ENCODE measurements at regions of chr13 and their contacts with region 1.

Region 1: DNA sequence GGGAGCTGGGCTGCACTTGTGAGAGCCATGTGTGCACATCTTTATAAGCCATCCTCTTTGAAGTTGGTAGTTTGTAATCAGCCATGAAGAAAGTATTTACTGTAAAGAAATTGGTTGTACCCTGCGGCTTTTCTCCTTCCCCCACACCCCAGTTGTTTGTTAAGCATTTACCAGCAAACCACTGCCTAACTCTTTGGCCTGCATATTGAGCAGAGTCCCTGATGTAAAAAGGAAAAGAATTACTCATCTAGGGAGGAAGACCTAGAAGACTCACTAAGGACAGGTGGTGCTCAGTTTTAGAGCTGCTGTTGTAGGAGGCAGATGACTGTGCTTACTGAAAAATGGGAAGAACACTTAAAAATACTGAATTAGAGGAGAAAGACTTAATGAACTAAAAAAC is 245.3 kb downstream of the PCCA start:
- DNase-seq: no peak
- H3K4me3 ChIP-seq: no peak overlapping the region
- CTCF ChIP-seq: no peak

Region 2: GRCh38 chr13:99322297-99323103 is 1011.7 kb before region 1 on chr13:
- in situ Hi-C with region 1: no loop called
- DNase-seq: peak; percentile 78
- H3K4me3 ChIP-seq: no peak overlapping the region
- CTCF ChIP-seq: no peak

Region 3: GRCh38 chr13:100301418-100301817 is 32.8 kb before region 1 on chr13:
- in situ Hi-C with region 1: no loop called
- DNase-seq: peak; percentile 4
- H3K4me3 ChIP-seq: no peak overlapping the region
- CTCF ChIP-seq: no peak

Region 4: DNA sequence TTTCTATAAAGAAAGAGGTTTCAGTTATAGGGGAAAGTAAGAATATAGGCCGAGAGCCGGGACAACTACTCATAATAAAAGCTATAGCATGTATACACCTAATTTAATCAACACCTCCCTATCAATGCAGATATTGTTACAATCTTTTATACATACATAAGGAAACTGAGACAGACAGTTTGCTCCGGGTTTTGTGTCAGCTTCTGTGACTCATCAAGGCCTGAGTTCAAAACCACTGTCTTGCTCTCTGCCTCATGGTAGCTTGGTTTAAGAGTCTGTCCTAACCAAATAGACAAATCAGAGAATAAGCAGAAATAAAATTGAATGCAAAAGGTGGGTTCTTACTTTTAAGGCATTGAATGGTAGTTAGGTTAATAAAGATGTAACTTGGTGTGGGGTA is 31.5 kb after region 1 on chr13:
- in situ Hi-C with region 1: no loop called
- DNase-seq: no peak
- H3K4me3 ChIP-seq: no peak overlapping the region
- CTCF ChIP-seq: no peak

Region 5: GRCh38 chr13:100382785-100383184 is 48.6 kb after region 1 on chr13:
- in situ Hi-C with region 1: no loop called
- DNase-seq: no peak
- H3K4me3 ChIP-seq: no peak overlapping the region
- CTCF ChIP-seq: no peak

Region 6: DNA sequence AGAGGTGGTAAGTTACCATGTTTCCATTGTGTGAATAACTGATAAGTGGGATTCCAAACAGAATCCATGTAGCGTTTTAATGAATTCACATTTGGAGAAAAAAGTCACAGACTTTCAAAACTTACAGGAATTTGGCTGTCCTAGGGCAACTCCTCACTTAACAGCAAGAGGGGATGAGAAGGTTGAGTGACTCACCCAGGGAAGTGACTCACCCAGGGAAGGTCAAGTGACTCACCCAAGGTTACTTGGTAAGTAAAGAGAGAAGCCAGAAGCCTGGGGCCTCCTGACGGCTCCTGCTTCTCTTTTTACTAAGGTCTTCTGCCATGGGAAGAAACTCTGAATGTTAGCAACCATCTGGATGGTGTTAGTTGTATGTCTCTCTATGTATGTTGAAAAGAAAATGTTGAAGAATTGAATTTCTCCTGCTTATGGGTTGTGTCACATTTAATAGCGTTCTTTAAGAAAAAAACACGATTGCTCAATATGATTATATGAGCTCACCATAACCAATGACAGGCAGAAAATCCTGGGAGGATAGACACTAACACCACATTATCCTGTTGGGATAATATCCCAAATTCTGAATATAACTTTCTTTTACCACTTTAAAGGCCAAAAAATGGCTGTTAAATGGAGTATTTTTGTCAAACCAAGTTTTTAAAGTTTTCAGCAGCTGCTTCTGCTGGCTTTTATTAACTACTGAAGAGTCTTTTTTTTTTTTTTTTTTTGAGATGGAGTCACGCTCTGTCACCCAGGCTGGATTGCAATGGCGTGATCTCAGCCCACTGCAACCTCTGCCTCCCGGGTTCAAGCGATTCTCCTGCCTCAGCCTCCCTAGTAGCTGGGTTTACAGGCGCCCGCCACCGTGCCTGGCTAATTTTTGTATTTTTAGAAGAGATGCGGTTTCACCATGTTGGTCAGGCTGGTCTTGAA is 58.8 kb after region 1 on chr13:
- in situ Hi-C with region 1: loop called (anchors 5 kb)
- DNase-seq: peak; percentile 100
- H3K4me3 ChIP-seq: no peak overlapping the region
- CTCF ChIP-seq: no peak